Heart left ventricle (tissue), 16 donors: ENCODE measurements at regions of chr1 and their contacts with region 1.

Region 1: DNA sequence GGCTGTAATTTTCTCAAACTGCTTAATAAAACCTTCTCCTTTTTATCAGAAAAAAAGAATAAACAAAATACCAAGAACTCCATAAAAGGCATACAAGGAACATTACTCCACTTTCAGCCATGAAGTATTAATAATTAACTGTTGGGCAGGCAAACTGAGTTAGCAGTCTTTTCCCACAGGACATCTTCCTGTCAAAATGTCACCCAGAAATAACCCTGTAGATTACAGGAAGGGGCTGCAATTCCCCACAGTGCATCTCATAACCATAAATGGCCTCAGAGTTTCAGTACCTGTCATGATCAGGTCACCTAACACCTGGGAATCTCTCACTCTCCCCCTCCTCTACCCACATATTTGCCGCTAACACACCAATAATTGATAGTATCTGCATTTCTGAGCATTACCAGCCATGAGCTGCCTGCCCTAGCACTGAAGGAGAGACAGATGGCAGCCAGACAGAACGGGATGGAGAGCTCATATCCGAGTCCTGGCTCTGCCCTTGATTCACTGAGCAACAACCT is 475.0 kb downstream of the SMYD3 start:
- DNase-seq: no peak
- ATAC-seq: no peak
- H3K4me3 ChIP-seq: no peak overlapping the region
- H3K27ac ChIP-seq: no peak overlapping the region
- H3K4me1 ChIP-seq: peaks cover 0 to 3% (median 0%) of the 10 kb centered on the region in 12 donors
- H3K27me3 ChIP-seq: no peaks in the 10 kb centered on the region
- CTCF ChIP-seq: no peak
- POLR2A ChIP-seq: no peak

Region 2: DNA sequence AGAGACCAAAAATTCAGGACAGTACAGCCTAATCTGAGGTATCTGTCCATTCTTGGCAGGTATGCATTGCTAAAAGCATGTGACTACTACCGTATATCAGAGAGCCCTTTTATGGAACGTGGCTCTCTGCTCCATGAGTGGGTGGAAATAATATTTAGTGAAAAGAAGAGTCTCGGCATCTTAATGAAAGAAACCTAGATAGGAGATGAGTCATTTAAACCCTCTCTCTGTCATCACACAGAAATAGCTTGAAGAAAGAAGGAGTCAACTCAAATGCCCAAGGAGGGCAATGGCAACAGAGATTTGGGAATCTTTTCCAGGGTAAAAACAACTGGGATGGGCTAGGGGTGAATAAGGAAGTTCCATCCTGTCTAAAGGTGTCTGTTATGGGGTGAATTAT is 53.2 kb before region 1 on chr1:
- intact Hi-C with region 1: no loop called
- DNase-seq: no peak
- ATAC-seq: no peak
- H3K4me3 ChIP-seq: no peak overlapping the region
- H3K27ac ChIP-seq: no peak overlapping the region
- H3K4me1 ChIP-seq: no peaks in the 10 kb centered on the region
- H3K27me3 ChIP-seq: no peaks in the 10 kb centered on the region
- CTCF ChIP-seq: no peak
- POLR2A ChIP-seq: no peak

Region 3: GRCh38 chr1:245997471-245998258 is 34.4 kb before region 1 on chr1:
- intact Hi-C with region 1: loop called in 1 of 10 experiments (anchors 2 kb)
- DNase-seq: peak; percentile 52 to 76 (median 55)
- ATAC-seq: peak; percentile 90 to 97 (median 95)
- H3K4me3 ChIP-seq: no peak overlapping the region
- H3K27ac ChIP-seq: no peak overlapping the region
- H3K4me1 ChIP-seq: peaks cover 0 to 8% (median 0%) of the 10 kb centered on the region in 12 donors
- H3K27me3 ChIP-seq: no peaks in the 10 kb centered on the region
- CTCF ChIP-seq: no peak
- POLR2A ChIP-seq: no peak